B cell (primary cell): ENCODE measurements at regions of chr1 and their contacts with region 1.

Region 1: GRCh38 chr1:206905280-206906164 is 8.3 kb downstream of the IL24 start:
- DNase-seq: peak; percentile 62
- ATAC-seq: peak; percentile 86
- H3K4me3 ChIP-seq: no peak overlapping the region
- H3K4me3 Mint-ChIP-seq: peak overlapping the region; percentile 64
- H3K27ac ChIP-seq: peak overlapping the region; percentile 49 to 79
- H3K27ac Mint-ChIP-seq: peak overlapping the region; percentile 82
- H3K4me1 ChIP-seq: peaks cover 51 to 61% of the 10 kb centered on the region in 2 donors
- H3K4me1 Mint-ChIP-seq: peaks cover 77% of the 10 kb centered on the region
- H3K27me3 ChIP-seq: no peaks in the 10 kb centered on the region
- H3K27me3 Mint-ChIP-seq: no peaks in the 10 kb centered on the region
- CTCF ChIP-seq: no peak

Region 2: GRCh38 chr1:206761159-206761768 is 144.3 kb before region 1 on chr1:
- CTCF ChIA-PET with region 1: no interaction called
- POLR2A ChIA-PET with region 1: no interaction called
- intact Hi-C with region 1: no loop called
- DNase-seq: no peak
- ATAC-seq: no peak
- H3K4me3 ChIP-seq: no peak overlapping the region
- H3K4me3 Mint-ChIP-seq: no peak overlapping the region
- H3K27ac ChIP-seq: no peak overlapping the region
- H3K27ac Mint-ChIP-seq: no peak overlapping the region
- H3K4me1 ChIP-seq: peaks cover 13 to 16% of the 10 kb centered on the region in 2 donors
- H3K4me1 Mint-ChIP-seq: peaks cover 8% of the 10 kb centered on the region
- H3K27me3 ChIP-seq: no peaks in the 10 kb centered on the region
- H3K27me3 Mint-ChIP-seq: no peaks in the 10 kb centered on the region
- CTCF ChIP-seq: no peak

Region 3: DNA sequence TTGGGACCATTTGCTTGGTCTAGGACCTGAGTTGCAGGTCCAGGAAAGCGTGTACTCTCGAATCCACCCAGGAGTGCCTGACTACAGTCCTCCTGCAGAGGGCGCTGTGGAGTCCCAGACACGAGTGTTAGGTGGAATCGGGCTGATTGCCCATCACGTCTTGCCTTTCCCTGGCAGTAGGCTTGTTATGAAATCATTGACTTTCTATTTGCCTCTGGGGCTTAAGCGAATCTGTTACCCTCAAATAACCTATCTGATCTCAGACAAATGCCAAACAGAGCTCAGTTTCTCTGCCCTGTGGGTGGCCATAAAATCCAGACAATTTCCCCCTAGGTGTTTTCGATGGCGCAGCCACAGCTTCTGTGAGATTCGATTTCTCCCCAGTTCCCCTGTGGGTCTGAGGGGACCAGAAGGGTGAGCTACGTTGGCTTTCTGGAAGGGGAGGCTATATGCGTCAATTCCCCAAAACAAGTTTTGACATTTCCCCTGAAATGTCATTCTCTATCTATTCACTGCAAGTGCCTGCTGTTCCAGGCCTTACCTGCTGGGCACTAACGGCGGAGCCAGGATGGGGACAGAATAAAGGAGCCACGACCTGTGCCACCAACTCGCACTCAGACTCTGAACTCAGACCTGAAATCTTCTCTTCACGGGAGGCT is 40.4 kb before region 1 on chr1 and contains the start of gene IL20:
- CTCF ChIA-PET with region 1: interaction called, 22 read pairs
- POLR2A ChIA-PET with region 1: no interaction called
- intact Hi-C with region 1: no loop called
- DNase-seq: peak; percentile 82
- ATAC-seq: peak; percentile 80
- H3K4me3 ChIP-seq: no peak within 1 kb of the TSS
- H3K4me3 Mint-ChIP-seq: no peak within 1 kb of the TSS
- H3K27ac ChIP-seq: no peak within 1 kb of the TSS
- H3K27ac Mint-ChIP-seq: peak within 1 kb of the TSS; percentile 43
- H3K4me1 ChIP-seq: no peaks in the 10 kb centered on the region
- H3K4me1 Mint-ChIP-seq: peaks cover 7% of the 10 kb centered on the region
- H3K27me3 ChIP-seq: peaks cover 0 to 4% (median 0%) of the 10 kb centered on the region in 4 experiments
- H3K27me3 Mint-ChIP-seq: peaks cover 16% of the 10 kb centered on the region
- CTCF ChIP-seq: peak; percentile 97
- total RNA-seq, gene IL20: not detected in 2 replicates

Region 4: DNA sequence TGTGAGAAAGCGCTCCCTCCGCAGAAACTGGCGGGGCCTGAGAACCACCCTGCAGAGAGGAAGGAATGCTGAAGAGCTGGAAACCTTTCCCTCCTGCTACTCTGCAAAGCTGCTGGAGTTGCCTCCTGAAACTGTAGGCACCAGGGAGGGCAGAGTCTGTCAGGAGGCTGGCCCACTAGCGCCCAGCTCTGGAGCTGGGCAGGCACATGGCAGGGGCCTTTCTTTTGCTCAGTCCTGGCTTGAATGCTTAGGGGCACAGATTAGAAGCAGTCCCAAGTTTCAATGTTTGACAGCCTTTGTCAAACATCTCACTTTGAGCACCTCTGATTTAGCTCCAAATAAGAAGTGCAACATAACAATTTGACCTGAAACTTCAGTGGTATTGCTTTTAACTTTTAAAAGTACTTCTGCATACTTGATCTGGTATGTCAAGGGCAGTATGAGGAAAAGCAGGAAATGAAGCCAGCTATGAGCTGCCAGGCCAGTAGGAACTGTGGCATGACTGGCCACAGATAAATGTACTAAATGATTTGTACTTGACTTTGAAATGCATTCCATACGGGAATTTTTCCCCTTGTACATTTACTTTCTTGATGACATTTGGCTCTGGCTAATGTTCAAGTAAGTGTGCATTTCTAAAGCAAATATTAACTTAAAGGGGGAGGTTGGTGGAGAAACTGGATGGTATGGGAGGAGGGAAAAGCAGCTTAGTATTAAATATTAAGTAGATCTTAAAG is 119.8 kb after region 1 on chr1:
- CTCF ChIA-PET with region 1: no interaction called
- POLR2A ChIA-PET with region 1: no interaction called
- intact Hi-C with region 1: no loop called
- DNase-seq: no peak
- ATAC-seq: no peak
- H3K4me3 ChIP-seq: no peak overlapping the region
- H3K4me3 Mint-ChIP-seq: no peak overlapping the region
- H3K27ac ChIP-seq: no peak overlapping the region
- H3K27ac Mint-ChIP-seq: no peak overlapping the region
- H3K4me1 ChIP-seq: no peaks in the 10 kb centered on the region
- H3K4me1 Mint-ChIP-seq: no peaks in the 10 kb centered on the region
- H3K27me3 ChIP-seq: peaks cover 0 to 20% (median 14%) of the 10 kb centered on the region in 4 experiments
- H3K27me3 Mint-ChIP-seq: peaks cover 36% of the 10 kb centered on the region
- CTCF ChIP-seq: no peak

Region 5: GRCh38 chr1:207404849-207405525 is 499.5 kb after region 1 on chr1:
- CTCF ChIA-PET with region 1: no interaction called
- POLR2A ChIA-PET with region 1: no interaction called
- intact Hi-C with region 1: no loop called
- DNase-seq: peak; percentile 77
- ATAC-seq: peak; percentile 71
- H3K4me3 ChIP-seq: no peak overlapping the region
- H3K4me3 Mint-ChIP-seq: no peak overlapping the region
- H3K27ac ChIP-seq: no peak overlapping the region
- H3K27ac Mint-ChIP-seq: peak overlapping the region; percentile 74
- H3K4me1 ChIP-seq: peaks cover 18 to 27% of the 10 kb centered on the region in 2 donors
- H3K4me1 Mint-ChIP-seq: peaks cover 30% of the 10 kb centered on the region
- H3K27me3 ChIP-seq: no peaks in the 10 kb centered on the region
- H3K27me3 Mint-ChIP-seq: no peaks in the 10 kb centered on the region
- CTCF ChIP-seq: peak; percentile 92